GM18951 (cell line): ENCODE measurements at regions of chrX and their contacts with region 1.

Region 1: DNA sequence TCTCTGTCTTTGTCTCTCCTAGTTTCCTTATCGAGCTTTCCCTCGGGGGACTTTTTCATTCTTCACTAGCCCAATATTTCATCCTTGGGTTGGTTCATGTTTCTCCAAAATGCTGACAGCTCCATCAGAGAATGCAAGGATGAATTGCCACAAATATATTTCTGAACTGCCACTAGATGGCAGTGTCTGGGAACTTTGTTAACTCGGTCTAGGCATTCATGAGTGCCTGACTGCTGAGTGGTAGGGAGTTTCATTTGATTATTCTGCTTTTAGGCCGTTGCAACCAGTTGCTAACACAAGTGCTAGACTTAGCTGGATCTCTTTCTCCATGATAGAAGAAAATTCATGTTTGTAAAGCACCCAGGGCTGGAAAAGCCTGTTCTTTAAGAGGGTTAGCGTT is 73.5 kb upstream of the RAP2C start:
- POLR2A ChIP-seq: no peak

Region 2: GRCh38 chrX:132609394-132609793 is 316.6 kb after region 1 on chrX:
- in situ Hi-C with region 1: loop called (anchors 10 kb)
- POLR2A ChIP-seq: no peak